ENCODE measurements at regions of chr3 and their contacts with region 1.

Region 1: DNA sequence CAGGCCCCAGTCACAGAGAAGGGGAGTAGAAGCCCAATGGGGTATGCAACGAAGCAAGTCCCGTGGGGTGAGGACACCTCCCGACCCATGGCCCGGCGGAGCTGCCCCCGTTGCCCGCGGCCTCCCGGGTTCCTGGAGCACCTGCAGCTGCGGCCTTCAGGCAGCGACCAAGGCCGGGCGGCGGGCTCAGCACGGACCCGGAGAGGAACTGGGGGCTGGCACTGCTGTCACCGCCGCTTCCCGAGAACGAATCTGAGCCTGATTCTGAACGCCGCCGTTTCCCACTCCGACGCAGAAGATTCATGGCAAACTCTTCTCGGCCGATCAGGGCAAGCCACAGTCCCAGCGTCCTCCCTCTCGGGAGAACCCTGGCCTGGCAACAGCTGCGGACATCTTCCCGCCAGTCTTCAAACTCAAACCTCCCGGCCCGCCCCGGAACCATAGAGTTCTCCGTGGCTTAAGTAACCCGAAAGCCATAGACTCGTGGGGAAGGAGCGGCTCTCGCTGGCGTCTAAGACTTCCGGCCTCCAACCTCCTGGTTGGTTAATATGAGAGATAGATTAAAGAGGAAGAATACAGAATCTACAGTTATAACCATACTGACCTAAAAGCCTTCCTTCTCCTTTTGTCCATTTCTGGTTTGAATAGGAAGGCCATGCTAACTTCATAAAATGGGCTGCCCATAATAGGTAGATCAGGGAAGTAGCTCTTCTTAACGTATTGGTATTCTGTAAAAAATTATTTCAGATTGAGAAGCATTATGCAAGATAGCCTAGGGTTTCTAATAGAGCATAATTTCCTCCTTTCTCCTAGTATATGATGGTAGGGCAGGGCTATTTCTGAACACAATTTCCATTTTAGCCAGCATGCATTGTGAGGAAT is at the start of gene POLQ:
- DNase-seq: peak; percentile 88 to 97 (median 94)
- H3K4me3 ChIP-seq: peak within 1 kb of the TSS; percentile 42 to 85 (median 70)
- H3K27ac ChIP-seq: peak within 1 kb of the TSS in 58 of 59 donors; percentile 35 to 94 (median 82)
- H3K27me3 ChIP-seq: no peaks in the 10 kb centered on the region
- CTCF ChIP-seq: peak in 28 of 56 donors; percentile 16 to 61 (median 37)
- total RNA-seq, gene POLQ: 0.31 to 2.9 (median 0.84) TPM

Region 2: DNA sequence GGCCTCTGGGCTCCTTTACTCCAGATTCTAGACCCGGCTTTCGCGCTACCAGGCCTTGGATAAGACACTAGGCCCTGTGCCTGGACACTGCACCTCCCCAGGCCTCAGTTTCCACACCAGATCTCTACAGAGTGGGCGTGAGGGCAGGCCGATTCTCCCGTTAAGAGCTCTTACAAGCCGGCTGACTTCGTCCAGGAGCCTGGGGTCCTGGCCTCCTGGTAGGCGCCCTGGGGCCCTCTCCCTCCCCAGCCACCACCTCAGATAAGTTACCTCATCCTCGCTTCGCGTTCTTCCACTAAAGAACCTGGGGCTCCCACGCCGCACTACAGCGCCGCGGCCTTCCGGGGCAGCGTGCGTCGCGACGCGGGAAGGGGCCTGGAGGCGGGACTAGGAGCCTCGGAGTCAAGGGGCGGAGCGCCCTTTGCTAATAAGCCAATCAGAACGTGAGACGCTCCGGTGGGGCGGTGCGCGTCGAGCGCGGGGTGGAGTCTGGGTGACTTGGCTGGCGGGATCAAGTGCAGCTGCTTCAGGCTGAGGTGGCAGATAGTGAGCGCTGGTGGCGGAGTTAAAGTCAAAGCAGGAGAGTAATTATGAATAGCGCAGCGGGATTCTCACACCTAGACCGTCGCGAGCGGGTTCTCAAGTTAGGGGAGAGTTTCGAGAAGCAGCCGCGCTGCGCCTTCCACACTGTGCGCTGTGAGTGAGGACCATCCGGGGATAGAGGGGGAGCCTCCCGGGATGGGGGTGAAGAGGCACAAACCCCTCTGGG is 289.1 kb after region 1 on chr3 and contains the starts of genes EAF2 and IQCB1:
- intact Hi-C with region 1: loop called in 1 of 2 experiments (anchors 10 kb)
- DNase-seq: peak; percentile 88 to 98 (median 96)
- H3K4me3 ChIP-seq: peak within 1 kb of the TSS; percentile 44 to 96 (median 84)
- H3K27ac ChIP-seq: peak within 1 kb of the TSS in 41 of 59 donors; percentile 5 to 88 (median 56)
- H3K27me3 ChIP-seq: no peaks in the 10 kb centered on the region
- CTCF ChIP-seq: peak in 38 of 56 donors; percentile 4 to 57 (median 33)
- total RNA-seq, gene EAF2: 8.6 to 27.8 (median 18.3) TPM
- total RNA-seq, gene IQCB1: 13.0 to 33.0 (median 21.6) TPM

Region 3: DNA sequence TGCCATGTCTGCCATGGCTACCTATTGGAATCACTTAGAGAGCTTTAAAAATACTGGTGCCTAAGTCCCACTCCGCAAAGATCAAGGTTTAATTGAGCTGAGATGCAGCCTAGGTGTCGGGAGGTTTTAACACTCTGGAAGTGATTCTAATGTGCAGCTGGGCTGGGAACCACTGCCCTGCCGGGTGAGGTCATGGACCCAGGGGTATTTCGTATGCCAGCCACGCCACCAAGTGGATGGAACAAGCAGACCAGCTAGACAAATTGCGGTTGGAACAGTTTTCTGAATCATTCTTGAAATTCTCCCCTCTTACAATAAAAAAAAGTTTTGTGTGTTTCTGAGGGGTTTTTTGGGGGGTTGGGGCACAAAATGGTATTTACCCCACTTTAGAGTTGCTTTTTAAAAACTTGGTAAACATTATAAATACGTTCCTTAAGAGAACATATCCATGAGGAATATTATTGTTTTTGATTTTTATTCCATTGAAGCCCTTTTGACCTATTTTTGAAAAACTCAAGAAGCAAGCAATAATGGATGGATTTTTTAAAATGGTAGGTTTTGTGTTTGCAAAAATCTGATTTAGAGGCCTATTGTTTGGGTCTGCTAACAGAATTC is 713.0 kb after region 1 on chr3:
- intact Hi-C with region 1: loop called (anchors 5 kb)
- DNase-seq: peak in 6 of 10 donors; percentile 24 to 64 (median 50)
- H3K4me3 ChIP-seq: no peak overlapping the region
- H3K27ac ChIP-seq: no peak overlapping the region
- H3K27me3 ChIP-seq: peaks cover 0 to 2% (median 0%) of the 10 kb centered on the region in 45 donors
- CTCF ChIP-seq: peak in 53 of 56 donors; percentile 26 to 76 (median 52)

Region 4: DNA sequence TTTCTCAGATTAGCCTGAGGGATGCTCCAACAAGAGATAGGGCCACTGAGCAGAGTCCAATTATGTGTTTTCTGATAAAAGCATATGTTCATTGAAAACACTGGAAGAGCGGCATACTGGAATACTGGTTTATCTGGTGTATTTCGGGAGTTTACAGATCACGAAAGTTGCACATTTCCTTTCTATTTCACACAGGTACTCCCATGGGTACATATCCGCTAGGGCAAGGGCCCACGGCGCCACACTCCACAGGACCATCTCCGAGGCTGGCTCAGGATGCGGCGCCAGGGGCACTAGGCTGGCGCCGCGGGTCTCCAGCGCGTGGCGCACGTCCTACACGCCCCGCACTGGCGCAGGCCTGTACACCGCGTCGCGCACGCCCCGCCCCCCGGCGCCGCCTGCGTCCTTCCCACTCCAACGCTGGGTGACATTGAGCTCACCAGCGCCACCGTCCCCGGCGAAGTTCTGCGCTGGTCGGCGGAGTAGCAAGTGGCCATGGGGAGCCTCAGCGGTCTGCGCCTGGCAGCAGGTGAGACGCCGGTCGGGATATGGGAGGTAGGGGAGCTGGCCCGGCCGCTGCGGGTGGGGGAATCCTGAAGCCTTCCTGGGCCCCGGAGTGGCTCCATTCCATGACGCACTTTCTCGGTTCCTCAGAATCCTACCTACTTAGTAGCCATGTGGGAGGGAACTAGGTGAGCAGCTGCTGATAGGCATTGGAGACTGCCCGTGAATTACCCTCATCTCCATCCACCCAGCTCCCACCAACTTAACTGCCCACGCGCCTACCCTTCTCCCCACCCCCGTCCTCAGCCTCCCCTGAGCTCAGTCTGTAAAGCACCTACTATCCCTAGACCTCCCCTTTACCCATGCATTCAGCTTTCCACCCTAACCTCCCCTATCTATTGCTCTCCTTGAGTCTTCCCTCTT is 838.2 kb after region 1 on chr3 and contains the start of gene FAM162A:
- intact Hi-C with region 1: loop called (anchors 5 to 10 kb)
- DNase-seq: peak; percentile 89 to 97 (median 94)
- H3K4me3 ChIP-seq: peak within 1 kb of the TSS; percentile 52 to 97 (median 83)
- H3K27ac ChIP-seq: peak within 1 kb of the TSS; percentile 74 to 97 (median 91)
- H3K27me3 ChIP-seq: no peaks in the 10 kb centered on the region
- CTCF ChIP-seq: peak; percentile 54 to 95 (median 85)
- total RNA-seq, gene FAM162A: 26.1 to 101 (median 59.2) TPM

Region 5: GRCh38 chr3:122679085-122679881 is 1133.5 kb after region 1 on chr3:
- intact Hi-C with region 1: loop called in 1 of 2 experiments (anchors 5 kb)
- DNase-seq: peak; percentile 46 to 81 (median 66)
- H3K4me3 ChIP-seq: peak overlapping the region; percentile 14 to 89 (median 75)
- H3K27ac ChIP-seq: peak overlapping the region in 57 of 59 donors; percentile 6 to 95 (median 82)
- H3K27me3 ChIP-seq: peaks cover 0 to 4% (median 0%) of the 10 kb centered on the region in 45 donors
- CTCF ChIP-seq: peak; percentile 53 to 89 (median 80)

Region 6: GRCh38 chr3:123028233-123028828 is 1482.5 kb after region 1 on chr3:
- intact Hi-C with region 1: loop called in 1 of 2 experiments (anchors 5 kb)
- DNase-seq: peak in 8 of 10 donors; percentile 25 to 46 (median 40)
- H3K4me3 ChIP-seq: peak overlapping the region; percentile 48 to 80 (median 69)
- H3K27ac ChIP-seq: peak overlapping the region in 34 of 59 donors; percentile 2 to 77 (median 48)
- H3K27me3 ChIP-seq: peaks cover 0 to 34% (median 0%) of the 10 kb centered on the region in 45 donors
- CTCF ChIP-seq: peak in 55 of 56 donors; percentile 46 to 81 (median 65)

Measured in dorsolateral prefrontal cortex (tissue), 120 donors.